ENCODE measurements at regions of chr3 and their contacts with region 1.

Region 1: GRCh38 chr3:186806089-186807055 is at the start of gene RFC4:
- DNase-seq: peak in 1 of 2 experiments; percentile 89
- H3K4me3 ChIP-seq: peak within 1 kb of the TSS; percentile 72 to 97 (median 82)
- H3K27ac ChIP-seq: peak within 1 kb of the TSS; percentile 97
- H3K4me1 ChIP-seq: peaks cover 0 to 9% (median 3%) of the 10 kb centered on the region in 4 experiments; a peak in 3 of 7 replicates
- H3K27me3 ChIP-seq: no peaks in the 10 kb centered on the region
- CTCF ChIP-seq: no peak
- EP300 ChIP-seq: no peak; a peak in 1 of 3 replicates
- POLR2A ChIP-seq: peak; percentile 67 to 96
- RAD21 ChIP-seq: peak; percentile 0 to 1; a peak in 1 of 4 replicates
- total RNA-seq, gene RFC4: 86.9 and 100 TPM in 2 replicates

Region 2: DNA sequence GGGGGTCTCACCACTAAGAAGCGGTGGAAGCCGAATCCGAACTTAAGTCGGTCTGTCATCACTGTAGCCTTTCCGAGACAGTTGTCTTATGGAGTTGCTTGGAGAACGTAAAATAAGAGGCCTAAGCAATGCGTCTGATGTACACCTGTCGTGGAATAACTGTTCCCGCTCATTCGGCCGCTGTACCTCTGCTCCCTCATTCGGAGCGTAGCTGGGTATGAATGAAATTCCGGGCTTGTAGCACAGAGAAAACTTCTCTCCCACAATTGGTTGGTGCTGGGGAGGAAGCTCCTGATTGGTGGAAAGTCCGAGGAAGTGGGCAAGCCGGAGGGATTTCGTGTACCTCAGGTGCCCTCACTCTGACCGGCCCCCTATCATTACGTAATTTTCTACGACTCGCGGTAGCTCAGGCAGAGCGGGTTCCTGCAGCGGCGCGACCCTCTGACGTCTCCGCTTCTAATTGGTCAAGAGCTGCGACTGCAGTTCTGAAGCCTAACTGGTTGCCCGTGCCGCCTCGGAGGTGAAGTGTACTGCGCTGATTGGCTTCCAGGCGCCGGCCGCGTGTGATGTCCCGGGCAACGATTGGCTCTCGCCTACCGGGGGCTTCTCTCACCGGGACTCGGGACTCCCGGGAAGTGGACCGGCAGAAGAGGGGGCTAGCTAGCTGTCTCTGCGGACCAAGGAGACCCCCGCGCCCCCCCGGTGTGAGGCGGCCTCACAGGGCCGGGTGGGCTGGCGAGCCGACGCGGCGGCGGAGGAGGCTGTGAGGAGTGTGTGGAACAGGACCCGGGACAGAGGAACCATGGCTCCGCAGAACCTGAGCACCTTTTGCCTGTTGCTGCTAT is 236.1 kb before region 1 on chr3 and contains the start of gene DNAJB11:
- CTCF ChIA-PET with region 1: no interaction called
- POLR2A ChIA-PET with region 1: interaction called, 12 read pairs
- DNase-seq: peak; percentile 98 to 99
- H3K4me3 ChIP-seq: peak within 1 kb of the TSS; percentile 83 to 97 (median 89)
- H3K27ac ChIP-seq: peak within 1 kb of the TSS; percentile 93
- H3K4me1 ChIP-seq: peaks cover 0 to 11% (median 4%) of the 10 kb centered on the region in 4 experiments; a peak in 6 of 7 replicates
- H3K27me3 ChIP-seq: no peaks in the 10 kb centered on the region
- CTCF ChIP-seq: no peak
- EP300 ChIP-seq: no peak
- POLR2A ChIP-seq: peak; percentile 75 to 98
- RAD21 ChIP-seq: no peak
- total RNA-seq, gene DNAJB11: 63.9 and 67.7 TPM in 2 replicates

Region 3: DNA sequence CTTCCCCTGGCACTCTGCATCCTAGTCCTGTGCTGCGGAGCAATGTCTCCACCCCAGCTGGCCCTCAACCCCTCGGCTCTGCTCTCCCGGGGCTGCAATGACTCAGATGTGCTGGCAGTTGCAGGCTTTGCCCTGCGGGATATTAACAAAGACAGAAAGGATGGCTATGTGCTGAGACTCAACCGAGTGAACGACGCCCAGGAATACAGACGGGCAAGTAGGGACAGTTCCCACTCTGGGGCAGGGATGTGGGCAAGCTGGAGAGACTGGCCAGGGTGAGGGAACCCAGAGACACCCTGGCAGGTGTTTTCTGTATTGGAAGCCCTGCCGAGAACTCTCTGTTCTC is 165.9 kb before region 1 on chr3:
- CTCF ChIA-PET with region 1: no interaction called
- POLR2A ChIA-PET with region 1: no interaction called
- DNase-seq: no peak
- H3K4me3 ChIP-seq: no peak overlapping the region
- H3K27ac ChIP-seq: no peak overlapping the region
- H3K4me1 ChIP-seq: peaks cover 5 to 12% (median 8%) of the 10 kb centered on the region in 4 experiments; a peak in 5 of 7 replicates
- H3K27me3 ChIP-seq: no peaks in the 10 kb centered on the region; a peak in 1 of 7 replicates
- CTCF ChIP-seq: no peak
- EP300 ChIP-seq: no peak
- POLR2A ChIP-seq: no peak
- RAD21 ChIP-seq: no peak

Region 4: GRCh38 chr3:186821429-186822367 is 15.3 kb after region 1 on chr3:
- CTCF ChIA-PET with region 1: interaction called, 10 read pairs
- POLR2A ChIA-PET with region 1: interaction called, 15 read pairs
- DNase-seq: no peak
- H3K4me3 ChIP-seq: no peak overlapping the region
- H3K27ac ChIP-seq: no peak overlapping the region
- H3K4me1 ChIP-seq: peaks cover 7 to 23% (median 19%) of the 10 kb centered on the region in 4 experiments
- H3K27me3 ChIP-seq: peaks cover 0 to 23% (median 14%) of the 10 kb centered on the region in 4 experiments; a peak in 5 of 7 replicates
- CTCF ChIP-seq: peak in 2 of 3 experiments; percentile 41 to 57; a peak in 2 of 4 replicates
- EP300 ChIP-seq: no peak
- POLR2A ChIP-seq: no peak
- RAD21 ChIP-seq: peak; percentile 73 to 78

Region 5: DNA sequence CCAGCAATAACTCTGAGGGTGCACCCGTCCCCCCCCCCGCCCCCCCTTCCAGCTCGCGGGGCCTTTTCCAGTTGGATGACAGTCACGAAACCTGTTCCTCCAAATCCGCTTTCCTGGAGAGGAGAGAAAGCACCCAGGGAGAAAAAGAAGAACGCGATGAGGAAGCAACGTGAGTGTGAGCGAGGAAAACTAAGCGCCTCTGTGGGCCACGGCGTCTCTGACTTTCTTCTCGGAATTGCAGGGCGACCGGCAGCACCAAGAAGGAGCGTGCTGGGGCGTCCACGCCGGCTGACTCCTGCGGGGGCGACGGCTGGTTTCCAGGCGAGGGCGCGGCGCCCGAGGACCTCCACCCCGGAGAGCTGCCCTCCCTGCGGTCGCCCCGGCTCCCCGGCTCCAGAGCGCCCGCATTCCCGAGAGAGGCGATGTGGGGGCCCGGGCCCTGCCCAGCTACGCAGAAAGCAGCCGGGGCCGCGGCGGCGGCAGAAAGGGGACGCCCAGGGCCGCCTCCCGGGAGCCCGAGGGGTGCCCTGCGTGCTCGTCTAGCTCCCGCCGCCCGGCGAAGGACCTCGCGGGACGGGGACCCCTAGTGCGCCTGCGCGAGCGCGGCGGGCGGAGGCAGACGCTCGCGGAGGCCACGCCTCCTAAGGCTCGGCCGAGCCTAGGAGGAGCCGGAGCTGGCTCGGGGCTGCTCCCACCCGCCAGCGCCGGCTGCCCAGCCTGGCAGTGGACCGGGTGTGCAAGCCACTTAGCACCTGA is 20.8 kb after region 1 on chr3:
- CTCF ChIA-PET with region 1: interaction called, 10 read pairs
- POLR2A ChIA-PET with region 1: interaction called, 15 read pairs
- DNase-seq: peak in 1 of 2 experiments; percentile 88
- H3K4me3 ChIP-seq: peak overlapping the region; percentile 43 to 69 (median 46)
- H3K27ac ChIP-seq: no peak overlapping the region
- H3K4me1 ChIP-seq: peaks cover 7 to 23% (median 18%) of the 10 kb centered on the region in 4 experiments
- H3K27me3 ChIP-seq: peaks cover 0 to 38% (median 29%) of the 10 kb centered on the region in 4 experiments; a peak in 6 of 7 replicates
- CTCF ChIP-seq: no peak
- EP300 ChIP-seq: no peak
- POLR2A ChIP-seq: peak in 1 of 2 experiments; percentile 27; a peak in 1 of 3 replicates
- RAD21 ChIP-seq: no peak